ENCODE measurements at regions of chr21 and their contacts with region 1.

Region 1: DNA sequence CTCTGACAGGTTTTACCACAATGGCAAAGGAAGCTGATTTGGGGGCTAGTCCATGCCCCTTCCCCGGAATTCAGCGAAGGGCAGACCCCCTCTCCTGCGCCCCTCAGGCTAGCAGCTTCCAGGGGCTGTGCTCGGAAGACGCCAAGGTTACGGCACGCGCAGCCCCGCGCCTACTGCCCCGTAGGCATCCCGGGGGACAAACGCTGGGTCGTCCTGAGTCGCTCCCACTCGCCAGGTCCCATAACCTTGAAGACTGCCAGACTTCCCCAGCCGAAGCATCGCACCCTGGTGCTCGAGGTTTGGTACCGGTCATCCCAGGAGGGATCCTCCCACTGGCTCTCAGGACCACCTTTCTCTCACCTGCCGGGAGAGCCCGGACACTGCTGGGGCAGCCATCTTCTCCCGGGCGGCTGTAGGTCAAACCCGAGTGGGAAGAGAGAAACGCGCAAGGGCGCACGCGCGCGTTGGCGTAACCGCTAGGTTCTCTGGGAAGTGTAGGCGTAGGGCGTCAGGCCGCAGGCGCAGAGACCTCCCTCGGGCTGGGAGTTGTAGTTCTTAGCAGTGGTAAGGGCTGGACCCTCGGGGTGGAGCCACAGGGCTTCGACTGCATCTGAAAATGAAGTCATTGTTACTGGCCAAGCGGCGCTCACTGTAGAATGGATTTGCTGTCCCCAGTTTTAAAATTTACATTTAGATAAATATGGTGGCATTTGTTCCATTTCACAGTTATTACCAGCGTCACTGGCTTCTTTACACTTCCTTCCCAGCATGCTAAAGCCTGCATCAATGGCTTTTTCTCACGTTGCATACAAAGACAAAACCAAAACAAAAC is at the start of gene ATP5PO:
- DNase-seq: peak; percentile 97 to 98
- H3K4me3 ChIP-seq: peak within 1 kb of the TSS; percentile 80
- H3K4me1 ChIP-seq: peaks cover 9% of the 10 kb centered on the region
- H3K27me3 ChIP-seq: no peaks in the 10 kb centered on the region

Region 2: DNA sequence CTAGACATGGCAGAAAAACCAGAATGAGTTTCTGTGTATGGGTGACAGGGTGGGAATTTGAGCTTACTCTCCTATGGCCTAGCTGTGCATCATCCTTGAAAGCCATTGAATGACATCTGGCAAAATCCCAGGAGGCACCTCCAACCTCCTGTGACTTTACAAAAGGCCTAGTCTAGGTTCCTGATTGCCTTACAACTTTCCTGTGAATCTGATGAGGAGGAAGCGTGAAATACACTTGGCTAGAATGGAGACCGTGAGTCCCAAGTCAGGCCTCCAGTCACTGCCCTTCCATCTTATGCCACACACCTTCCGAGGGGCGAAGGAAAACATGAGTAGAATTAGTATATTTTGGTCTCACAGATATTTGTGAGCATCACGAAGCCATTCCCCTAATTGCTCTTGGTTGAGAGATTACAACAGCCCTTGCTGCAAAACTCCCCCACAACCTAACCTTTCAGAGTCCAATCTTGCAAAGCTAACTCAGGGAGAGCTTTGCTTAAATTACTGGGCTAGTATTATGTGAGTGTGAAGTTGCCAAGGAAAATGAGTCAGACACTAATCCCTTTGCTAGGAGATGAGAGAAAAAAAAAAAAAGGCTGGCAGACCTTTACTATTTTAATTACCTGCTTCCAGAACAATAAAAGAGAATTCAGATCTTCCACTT is 1107.7 kb before region 1 on chr21:
- in situ Hi-C with region 1: no loop called
- DNase-seq: peak; percentile 48 to 86
- H3K4me3 ChIP-seq: no peak overlapping the region
- H3K4me1 ChIP-seq: peaks cover 16% of the 10 kb centered on the region
- H3K27me3 ChIP-seq: no peaks in the 10 kb centered on the region

Region 3: GRCh38 chr21:34235514-34235913 is 319.9 kb after region 1 on chr21:
- in situ Hi-C with region 1: no loop called
- DNase-seq: peak; percentile 52 to 93
- H3K4me3 ChIP-seq: no peak overlapping the region
- H3K4me1 ChIP-seq: peaks cover 14% of the 10 kb centered on the region
- H3K27me3 ChIP-seq: no peaks in the 10 kb centered on the region

Region 4: DNA sequence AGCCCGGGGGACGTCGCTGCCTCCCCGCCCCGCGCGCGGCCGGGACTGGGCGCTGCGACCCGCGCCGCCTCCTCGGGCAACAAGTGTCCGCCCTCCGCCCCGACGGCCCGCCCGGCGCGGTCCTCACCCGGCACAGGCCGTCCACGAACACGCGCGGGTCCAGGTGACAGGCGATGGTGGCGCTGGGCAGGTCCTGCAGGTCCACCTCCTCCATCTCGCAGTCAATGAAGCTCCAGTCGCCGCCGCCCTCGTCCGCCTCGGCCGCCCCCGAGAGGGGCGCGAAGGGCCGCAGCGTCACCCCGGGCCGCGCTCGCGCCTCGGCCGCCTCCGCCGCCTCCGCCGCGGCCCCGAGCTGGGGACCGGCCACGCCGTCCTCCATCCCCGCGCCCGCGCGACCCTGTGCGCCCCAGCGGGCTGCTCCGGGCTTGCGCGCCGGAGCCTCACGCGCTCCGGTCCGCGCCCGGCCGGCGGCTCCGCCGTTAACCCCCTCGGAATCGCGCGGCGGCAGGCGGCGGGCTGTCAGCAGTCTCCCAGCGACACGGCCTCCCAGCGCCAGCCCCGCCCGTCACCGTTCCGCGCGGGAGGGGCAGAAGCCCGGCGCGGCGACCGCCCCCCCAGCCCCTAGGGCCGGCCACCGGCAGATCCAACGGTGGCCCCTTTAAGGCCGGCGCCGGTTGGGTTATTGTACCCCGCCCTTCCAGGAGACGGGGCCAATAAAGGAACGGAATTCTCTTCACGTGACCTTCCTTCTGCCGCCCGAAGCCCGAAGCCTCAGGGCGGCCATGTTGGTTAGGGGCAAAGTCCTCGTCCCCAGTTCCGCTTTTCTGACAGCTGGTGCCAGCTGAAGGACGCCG is 699.3 kb after region 1 on chr21 and contains the start of gene RCAN1:
- in situ Hi-C with region 1: loop called (anchors 25 kb)
- DNase-seq: peak; percentile 92 to 96
- H3K4me3 ChIP-seq: peak within 1 kb of the TSS; percentile 44
- H3K4me1 ChIP-seq: peaks cover 28% of the 10 kb centered on the region
- H3K27me3 ChIP-seq: no peaks in the 10 kb centered on the region